AG04449 (cell line): ENCODE measurements at regions of chr17 and their contacts with region 1.

Region 1: GRCh38 chr17:4074831-4075495 is 67.9 kb downstream of the ZZEF1 start:
- DNase-seq: no peak
- H3K4me3 ChIP-seq: no peak overlapping the region
- CTCF ChIP-seq: peak; percentile 59

Region 2: DNA sequence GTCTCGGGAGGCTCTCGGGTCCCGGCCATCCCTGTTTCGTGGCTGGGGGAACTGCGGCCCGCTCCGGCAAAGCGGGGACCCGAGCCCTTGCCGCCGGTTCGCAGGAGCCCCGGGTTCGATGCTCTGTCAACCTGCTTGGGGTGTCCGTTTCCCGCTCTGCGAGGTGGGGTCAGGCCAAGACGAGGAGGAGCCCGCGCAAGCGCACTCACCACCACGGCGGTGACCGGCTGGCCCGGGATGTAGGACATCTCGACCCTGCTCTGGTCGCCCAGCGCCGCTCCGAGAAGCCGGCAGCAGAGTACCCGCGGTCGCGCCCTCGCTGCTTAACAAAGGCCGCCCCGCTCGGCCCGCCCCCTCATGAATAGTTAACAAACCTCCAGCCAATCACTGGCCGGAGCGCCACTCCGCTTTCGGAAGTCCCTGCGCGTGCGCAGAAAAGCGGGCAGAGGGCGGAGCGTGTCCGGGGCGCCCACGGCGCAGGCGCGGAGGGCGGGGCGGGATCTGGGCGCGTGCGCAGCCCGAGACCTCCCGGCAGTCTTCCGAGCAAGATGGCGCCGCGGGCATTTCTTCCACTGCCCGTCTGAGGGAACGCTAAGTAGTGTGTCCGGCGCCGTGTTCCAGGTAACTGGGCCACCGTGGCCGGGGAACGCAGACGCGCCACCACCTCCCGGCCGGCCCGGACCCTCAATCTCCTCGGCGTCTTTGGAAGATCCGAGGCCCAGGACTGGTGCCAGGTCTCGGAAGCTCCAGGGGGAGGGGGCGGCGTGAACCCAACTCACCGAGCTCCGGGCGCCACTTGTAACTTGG is 406.5 kb before region 1 on chr17 and contains the starts of genes EMC6 and TAX1BP3:
- CTCF ChIA-PET with region 1: no interaction called
- POLR2A ChIA-PET with region 1: no interaction called
- DNase-seq: peak; percentile 73
- H3K4me3 ChIP-seq: peak within 1 kb of the TSS; percentile 99
- CTCF ChIP-seq: no peak

Region 3: DNA sequence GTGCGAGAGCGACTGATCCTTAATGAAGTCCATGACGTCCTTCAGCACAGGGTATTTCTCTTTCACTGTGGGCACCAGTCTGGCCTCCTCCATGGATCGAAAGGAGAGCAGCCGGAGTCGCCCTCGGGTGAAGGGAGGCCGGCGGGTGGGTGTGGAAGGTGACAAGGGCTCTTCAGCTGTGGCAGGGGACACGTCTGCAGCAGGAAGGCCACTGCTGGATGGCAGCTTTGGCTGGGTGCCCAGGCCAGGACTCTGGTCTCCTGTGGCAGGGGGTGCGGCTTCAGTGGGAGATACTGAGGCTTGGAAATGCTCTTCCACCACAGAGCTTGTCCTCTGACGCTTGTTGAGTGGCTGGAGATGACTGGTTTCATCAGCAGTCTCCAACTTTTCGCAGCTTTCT is 10.6 kb before region 1 on chr17:
- CTCF ChIA-PET with region 1: interaction called, 45 read pairs
- POLR2A ChIA-PET with region 1: no interaction called
- DNase-seq: no peak
- H3K4me3 ChIP-seq: no peak overlapping the region
- CTCF ChIP-seq: no peak

Region 4: GRCh38 chr17:4086041-4086483 is 11.1 kb after region 1 on chr17:
- CTCF ChIA-PET with region 1: interaction called, 40 read pairs
- POLR2A ChIA-PET with region 1: no interaction called
- DNase-seq: no peak
- H3K4me3 ChIP-seq: no peak overlapping the region
- CTCF ChIP-seq: no peak

Region 5: DNA sequence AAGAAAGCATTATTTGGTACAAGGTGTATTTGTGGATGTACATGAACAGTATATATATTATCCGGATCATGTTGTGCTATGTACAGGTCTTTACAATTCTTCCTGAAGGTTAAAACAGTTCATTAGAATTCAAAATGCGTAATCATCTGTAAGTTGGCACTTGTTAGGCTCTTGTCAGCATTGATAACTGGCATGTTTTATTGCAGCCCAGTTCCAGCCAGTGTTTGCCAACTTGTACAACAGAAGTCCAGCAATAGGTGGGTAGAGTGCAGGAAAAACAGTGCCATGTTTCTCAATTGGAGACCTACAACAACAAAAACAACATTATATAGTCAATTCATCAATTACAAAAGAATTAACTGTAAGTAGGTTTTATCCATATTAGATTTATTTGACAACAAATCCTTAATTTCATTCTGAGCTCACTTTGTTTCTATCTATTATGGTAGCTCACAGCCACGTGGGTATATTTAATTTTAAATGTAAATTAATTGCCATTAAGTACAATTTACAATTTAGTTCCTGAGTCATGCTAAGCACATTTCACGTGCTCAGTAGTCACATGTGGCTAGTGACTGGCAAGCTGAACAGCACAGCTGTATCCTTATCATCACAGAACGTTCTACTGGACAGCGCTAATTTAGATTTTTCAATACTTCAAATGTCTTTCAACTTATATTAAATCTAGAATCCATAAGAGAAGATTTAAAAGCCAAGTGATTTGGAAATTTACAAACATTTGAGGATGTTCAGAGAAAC is 197.4 kb after region 1 on chr17:
- CTCF ChIA-PET with region 1: no interaction called
- POLR2A ChIA-PET with region 1: no interaction called
- DNase-seq: no peak
- H3K4me3 ChIP-seq: no peak overlapping the region
- CTCF ChIP-seq: no peak